IMR-90 (cell line): ENCODE measurements at regions of chr11 and their contacts with region 1.

Region 1: GRCh38 chr11:75371941-75372789 is 20.7 kb upstream of the ARRB1 start:
- DNase-seq: no peak
- ATAC-seq: peak; percentile 92
- H3K4me3 ChIP-seq: no peak overlapping the region
- H3K27ac ChIP-seq: no peak overlapping the region
- H3K4me1 ChIP-seq: peaks cover 6% of the 10 kb centered on the region; the same call in 1 of the 2 replicates
- H3K27me3 ChIP-seq: peaks cover 10% of the 10 kb centered on the region
- CTCF ChIP-seq: no peak
- POLR2A ChIP-seq: no peak
- RAD21 ChIP-seq: no peak

Region 2: DNA sequence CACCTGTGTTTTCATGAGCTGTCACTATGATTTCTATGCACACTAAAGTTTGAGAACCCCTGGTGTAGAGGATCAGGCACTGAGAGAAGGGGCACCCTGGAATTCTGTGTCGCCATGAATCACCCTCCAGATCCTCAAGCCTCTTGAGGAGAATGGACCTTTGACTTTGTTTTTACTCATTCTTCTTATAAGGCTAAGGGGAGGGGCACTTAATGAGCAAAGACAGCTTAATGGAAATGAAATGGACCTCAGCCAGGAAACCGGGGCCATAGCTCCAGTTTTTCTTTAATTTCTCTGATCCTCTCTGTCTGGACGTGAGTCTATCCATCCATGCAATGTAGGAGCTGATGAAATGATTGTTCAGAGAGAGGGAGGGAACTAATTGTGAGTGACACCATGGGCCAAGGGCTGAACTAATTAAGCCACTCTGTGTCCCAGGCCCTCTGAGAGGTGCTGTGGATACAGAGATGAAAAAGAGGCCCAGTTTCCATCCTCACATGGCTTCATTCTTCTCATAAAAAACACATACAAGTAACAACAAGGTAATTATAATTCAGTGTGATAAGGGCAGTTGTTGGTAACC is 308.3 kb before region 1 on chr11:
- CTCF ChIA-PET with region 1: no interaction called
- POLR2A ChIA-PET with region 1: no interaction called
- dilution Hi-C with region 1: no loop called
- in situ Hi-C with region 1: no loop called
- intact Hi-C with region 1: no loop called
- DNase-seq: peak; percentile 10
- ATAC-seq: no peak
- H3K4me3 ChIP-seq: no peak overlapping the region
- H3K27ac ChIP-seq: no peak overlapping the region
- H3K4me1 ChIP-seq: no peaks in the 10 kb centered on the region
- H3K27me3 ChIP-seq: peaks cover 23% of the 10 kb centered on the region
- CTCF ChIP-seq: no peak
- POLR2A ChIP-seq: no peak
- RAD21 ChIP-seq: no peak

Region 3: GRCh38 chr11:75388386-75389275 is 16.5 kb after region 1 on chr11:
- CTCF ChIA-PET with region 1: interaction called, 10 read pairs
- POLR2A ChIA-PET with region 1: no interaction called
- dilution Hi-C with region 1: no loop called
- in situ Hi-C with region 1: no loop called
- intact Hi-C with region 1: no loop called
- DNase-seq: peak; percentile 81
- ATAC-seq: peak; percentile 91
- H3K4me3 ChIP-seq: no peak overlapping the region
- H3K27ac ChIP-seq: no peak overlapping the region
- H3K4me1 ChIP-seq: peaks cover 4% of the 10 kb centered on the region
- H3K27me3 ChIP-seq: peaks cover 4% of the 10 kb centered on the region
- CTCF ChIP-seq: peak; percentile 93
- POLR2A ChIP-seq: no peak
- RAD21 ChIP-seq: peak; percentile 91

Region 4: DNA sequence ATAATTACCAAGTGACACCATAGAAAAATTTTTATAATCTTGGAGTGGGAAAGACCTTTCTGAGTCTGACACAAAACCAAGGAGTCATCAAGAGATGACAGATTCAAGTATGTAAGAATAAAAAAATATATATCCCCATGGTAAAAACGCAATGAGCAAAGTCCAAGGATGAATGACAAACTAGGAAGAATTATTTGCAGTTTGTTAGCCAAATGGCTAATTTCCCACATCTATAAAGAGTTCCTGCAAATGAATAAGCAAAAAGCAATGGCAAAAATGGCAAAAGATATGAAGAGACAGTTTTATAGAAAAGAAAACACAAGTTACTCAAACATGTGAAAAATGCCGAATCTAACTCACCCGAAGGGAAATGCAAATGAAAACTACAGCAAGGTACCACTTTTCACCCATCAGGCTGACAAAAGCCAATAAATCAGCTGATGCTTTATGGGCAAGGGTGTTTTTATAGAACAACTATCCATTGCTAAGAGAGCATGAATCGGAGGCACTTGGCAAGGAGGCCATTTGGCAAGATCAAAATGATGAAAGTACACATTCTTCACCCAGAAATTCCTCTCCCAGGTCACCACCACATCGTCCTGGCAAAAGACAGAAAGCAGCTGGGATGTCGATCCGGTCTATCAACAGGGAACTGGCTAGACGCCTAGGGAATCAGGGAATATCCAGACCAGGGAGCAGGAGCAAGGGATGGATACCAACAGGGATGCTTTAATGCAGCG is 81.9 kb after region 1 on chr11:
- CTCF ChIA-PET with region 1: no interaction called
- POLR2A ChIA-PET with region 1: no interaction called
- dilution Hi-C with region 1: no loop called
- in situ Hi-C with region 1: no loop called
- intact Hi-C with region 1: no loop called
- DNase-seq: peak; percentile 82
- ATAC-seq: peak; percentile 60
- H3K4me3 ChIP-seq: no peak overlapping the region
- H3K27ac ChIP-seq: no peak overlapping the region
- H3K4me1 ChIP-seq: peaks cover 7% of the 10 kb centered on the region
- H3K27me3 ChIP-seq: no peaks in the 10 kb centered on the region
- CTCF ChIP-seq: no peak
- POLR2A ChIP-seq: no peak
- RAD21 ChIP-seq: no peak